ENCODE measurements at regions of chr3 and their contacts with region 1.

Region 1: GRCh38 chr3:112582244-112582874 is 20.5 kb downstream of the SLC35A5 start:
- DNase-seq: peak; percentile 26
- ATAC-seq: 0 out of 2 replicates have a peak, but pooled peaks have one; percentile 36
- H3K4me3 Mint-ChIP-seq: no peak overlapping the region
- H3K27ac Mint-ChIP-seq: no peak overlapping the region
- H3K4me1 Mint-ChIP-seq: peaks cover 18% of the 10 kb centered on the region
- H3K27me3 Mint-ChIP-seq: no peaks in the 10 kb centered on the region
- CTCF ChIP-seq: no peak

Region 2: GRCh38 chr3:112814266-112814665 is 231.9 kb after region 1 on chr3:
- CTCF ChIA-PET with region 1: interaction called, 12 read pairs
- POLR2A ChIA-PET with region 1: no interaction called
- DNase-seq: no peak
- ATAC-seq: peak; percentile 72
- H3K4me3 Mint-ChIP-seq: no peak overlapping the region
- H3K27ac Mint-ChIP-seq: no peak overlapping the region
- H3K4me1 Mint-ChIP-seq: peaks cover 15% of the 10 kb centered on the region
- H3K27me3 Mint-ChIP-seq: no peaks in the 10 kb centered on the region
- CTCF ChIP-seq: no peak

Measured in WTC11 (cell line).